ENCODE measurements at regions of chr3 and their contacts with region 1.

Region 1: DNA sequence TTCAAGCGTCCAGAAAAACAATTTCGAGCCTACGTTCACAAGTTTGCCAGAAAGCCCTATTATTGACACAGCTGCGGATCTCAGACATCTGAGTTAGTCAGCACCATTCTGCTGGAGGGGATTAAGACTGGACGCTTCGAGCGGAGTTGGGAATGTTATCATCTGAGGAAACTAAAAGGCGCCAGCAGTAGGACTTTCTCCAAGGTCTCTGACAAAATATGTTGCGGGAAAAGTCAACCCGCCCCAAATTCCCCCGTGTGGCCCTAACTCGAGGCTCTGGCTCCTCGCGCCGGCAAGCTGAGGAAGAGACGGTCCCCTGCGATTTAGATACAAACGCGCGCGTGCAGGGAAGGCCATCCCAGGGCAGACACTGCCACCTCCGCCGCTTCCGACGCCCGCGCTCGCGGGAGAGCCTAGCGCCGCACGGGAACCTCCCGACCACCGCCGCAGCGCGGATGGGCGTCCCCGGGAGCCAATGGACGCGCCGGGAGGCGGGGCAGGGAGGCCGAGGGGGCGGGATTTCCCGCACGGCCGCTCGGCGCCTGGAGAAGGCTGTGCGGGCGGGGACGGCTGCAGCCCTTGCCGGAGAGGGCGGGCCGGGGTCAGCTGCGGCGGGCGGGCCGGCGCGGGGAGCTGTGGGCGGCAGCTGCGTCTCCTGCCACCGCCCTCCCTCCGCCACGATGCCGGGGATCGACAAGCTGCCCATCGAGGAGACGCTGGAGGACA is at the start of gene APPL1:
- DNase-seq: peak; percentile 85
- ATAC-seq: peak; percentile 99
- H3K4me3 ChIP-seq: peak within 1 kb of the TSS; percentile 86
- H3K27ac ChIP-seq: peak within 1 kb of the TSS; percentile 72
- H3K4me1 ChIP-seq: peaks cover 2% of the 10 kb centered on the region; the same call in 1 of the 2 replicates
- H3K27me3 ChIP-seq: no peaks in the 10 kb centered on the region
- CTCF ChIP-seq: no peak
- POLR2A ChIP-seq: peak; percentile 49; the same call in 1 of the 2 replicates
- RAD21 ChIP-seq: no peak
- total RNA-seq, gene APPL1: 42.2 and 46.2 TPM in 2 replicates

Region 2: DNA sequence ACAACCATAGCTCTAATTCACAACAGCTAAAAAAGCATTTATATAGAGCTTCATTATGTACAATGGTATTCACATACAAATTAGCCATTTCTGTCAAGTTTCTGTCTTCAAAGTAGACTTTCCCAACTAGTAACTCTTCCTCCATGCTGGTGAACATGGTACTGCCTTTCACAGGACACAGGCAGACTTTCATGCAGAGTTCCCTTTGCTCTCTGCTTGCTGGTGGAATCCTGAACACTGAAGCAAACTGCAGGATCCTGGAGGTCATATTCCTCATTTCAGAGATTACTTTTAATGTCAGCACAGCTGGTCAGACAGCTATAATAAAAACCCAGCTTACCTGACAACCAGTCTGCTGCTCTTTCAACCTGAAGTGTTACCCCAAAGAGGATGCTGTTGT is 597.9 kb before region 1 on chr3:
- CTCF ChIA-PET with region 1: no interaction called
- POLR2A ChIA-PET with region 1: no interaction called
- dilution Hi-C with region 1: no loop called
- in situ Hi-C with region 1: no loop called
- intact Hi-C with region 1: no loop called
- DNase-seq: no peak
- ATAC-seq: no peak
- H3K4me3 ChIP-seq: no peak overlapping the region
- H3K27ac ChIP-seq: no peak overlapping the region
- H3K4me1 ChIP-seq: peaks cover 5% of the 10 kb centered on the region
- H3K27me3 ChIP-seq: no peaks in the 10 kb centered on the region
- CTCF ChIP-seq: no peak
- POLR2A ChIP-seq: no peak
- RAD21 ChIP-seq: no peak

Region 3: GRCh38 chr3:57555738-57556458 is 328.5 kb after region 1 on chr3 and contains the start of gene PDE12:
- CTCF ChIA-PET with region 1: no interaction called
- POLR2A ChIA-PET with region 1: no interaction called
- dilution Hi-C with region 1: no loop called
- in situ Hi-C with region 1: no loop called
- intact Hi-C with region 1: loop called (anchors 1 kb)
- DNase-seq: peak; percentile 91
- ATAC-seq: peak; percentile 85
- H3K4me3 ChIP-seq: peak within 1 kb of the TSS; percentile 79
- H3K27ac ChIP-seq: peak within 1 kb of the TSS; percentile 73
- H3K4me1 ChIP-seq: peaks cover 1% of the 10 kb centered on the region; the same call in 1 of the 2 replicates
- H3K27me3 ChIP-seq: no peaks in the 10 kb centered on the region
- CTCF ChIP-seq: no peak
- POLR2A ChIP-seq: peak; percentile 95
- RAD21 ChIP-seq: 0 out of 2 replicates have a peak, but pooled peaks have one; percentile 13
- total RNA-seq, gene PDE12: 16.8 and 16.9 TPM in 2 replicates

Measured in IMR-90 (cell line).